Transverse colon (tissue), 4 donors: ENCODE measurements at regions of chr17 and their contacts with region 1.

Region 1: GRCh38 chr17:38922538-38923297 is 2.7 kb upstream of the LASP1NB start:
- DNase-seq: peak; percentile 68
- H3K4me3 ChIP-seq: no peak overlapping the region
- H3K27ac ChIP-seq: peak overlapping the region; percentile 9 to 75 (median 52)
- H3K4me1 ChIP-seq: peaks cover 17 to 52% (median 21%) of the 10 kb centered on the region in 4 donors
- H3K27me3 ChIP-seq: no peaks in the 10 kb centered on the region
- CTCF ChIP-seq: no peak
- EP300 ChIP-seq: no peak
- POLR2A ChIP-seq: no peak

Region 2: GRCh38 chr17:38872671-38873385 is 49.9 kb before region 1 on chr17:
- in situ Hi-C with region 1: no loop called
- intact Hi-C with region 1: loop called (anchors 2 kb)
- DNase-seq: peak; percentile 28
- H3K4me3 ChIP-seq: peak overlapping the region in 1 of 4 donors; percentile 97
- H3K27ac ChIP-seq: peak overlapping the region; percentile 91 to 99 (median 98)
- H3K4me1 ChIP-seq: peaks cover 50 to 75% (median 68%) of the 10 kb centered on the region in 4 donors
- H3K27me3 ChIP-seq: no peaks in the 10 kb centered on the region
- CTCF ChIP-seq: no peak
- EP300 ChIP-seq: no peak
- POLR2A ChIP-seq: no peak